Naive thymus-derived CD4-positive, alpha-beta T cell (primary cell): ENCODE measurements at regions of chr13 and their contacts with region 1.

Region 1: GRCh38 chr13:51397262-51397941 is 55.4 kb downstream of the INTS6 start:
- DNase-seq: no peak
- ATAC-seq: no peak
- H3K4me3 ChIP-seq: no peak overlapping the region
- H3K4me3 Mint-ChIP-seq: peak overlapping the region in 3 of 10 donors; percentile 3 to 29 (median 19)
- H3K27ac ChIP-seq: no peak overlapping the region
- H3K27ac Mint-ChIP-seq: peak overlapping the region in 3 of 9 donors; percentile 17 to 46 (median 22)
- H3K4me1 ChIP-seq: peaks cover 0 to 4% of the 10 kb centered on the region in 2 donors
- H3K4me1 Mint-ChIP-seq: peaks cover 16 to 81% (median 65%) of the 10 kb centered on the region in 7 donors
- H3K27me3 ChIP-seq: no peaks in the 10 kb centered on the region
- H3K27me3 Mint-ChIP-seq: no peaks in the 10 kb centered on the region

Region 2: GRCh38 chr13:51364404-51365008 is 32.9 kb before region 1 on chr13:
- CTCF ChIA-PET with region 1: no interaction called
- POLR2A ChIA-PET with region 1: no interaction called
- intact Hi-C with region 1: no loop called
- DNase-seq: no peak
- ATAC-seq: no peak
- H3K4me3 ChIP-seq: no peak overlapping the region
- H3K4me3 Mint-ChIP-seq: no peak overlapping the region
- H3K27ac ChIP-seq: no peak overlapping the region
- H3K27ac Mint-ChIP-seq: peak overlapping the region in 3 of 9 donors; percentile 13 to 46 (median 23)
- H3K4me1 ChIP-seq: no peaks in the 10 kb centered on the region
- H3K4me1 Mint-ChIP-seq: peaks cover 0 to 9% (median 0%) of the 10 kb centered on the region in 7 donors
- H3K27me3 ChIP-seq: no peaks in the 10 kb centered on the region
- H3K27me3 Mint-ChIP-seq: no peaks in the 10 kb centered on the region

Region 3: DNA sequence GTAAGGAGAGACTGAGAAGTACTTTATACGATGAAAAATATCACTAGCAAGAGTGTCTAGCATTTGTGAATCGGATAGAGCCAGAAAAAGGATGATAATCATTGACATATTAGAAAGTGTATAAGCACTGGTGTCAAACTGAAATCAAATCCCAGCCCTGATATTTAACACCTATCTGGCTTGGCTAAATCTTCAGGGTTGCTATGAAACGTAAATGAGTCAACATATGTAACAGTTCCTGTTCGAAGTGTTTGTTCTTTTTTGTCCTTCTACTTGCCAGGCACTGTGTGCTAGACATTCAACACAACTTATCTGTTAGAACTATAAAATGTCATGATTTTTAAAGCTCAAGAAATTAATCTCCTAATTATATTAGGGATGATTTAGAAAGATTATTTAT is 17.1 kb before region 1 on chr13:
- CTCF ChIA-PET with region 1: interaction called, 3 read pairs
- POLR2A ChIA-PET with region 1: no interaction called
- intact Hi-C with region 1: loop called in 1 of 2 experiments (anchors 2 kb)
- DNase-seq: no peak
- ATAC-seq: no peak
- H3K4me3 ChIP-seq: no peak overlapping the region
- H3K4me3 Mint-ChIP-seq: no peak overlapping the region
- H3K27ac ChIP-seq: no peak overlapping the region
- H3K27ac Mint-ChIP-seq: peak overlapping the region in 3 of 9 donors; percentile 13 to 58 (median 33)
- H3K4me1 ChIP-seq: no peaks in the 10 kb centered on the region
- H3K4me1 Mint-ChIP-seq: peaks cover 0 to 4% (median 0%) of the 10 kb centered on the region in 7 donors
- H3K27me3 ChIP-seq: no peaks in the 10 kb centered on the region
- H3K27me3 Mint-ChIP-seq: no peaks in the 10 kb centered on the region